H1 (cell line): ENCODE measurements at regions of chr22 and their contacts with region 1.

Region 1: GRCh38 chr22:36986242-36986821 is 32.9 kb downstream of the TST start:
- DNase-seq: peak in 1 of 2 experiments; percentile 87
- H3K4me3 ChIP-seq: no peak overlapping the region
- H3K27ac ChIP-seq: no peak overlapping the region
- H3K4me1 ChIP-seq: no peaks in the 10 kb centered on the region
- H3K27me3 ChIP-seq: peaks cover 0 to 3% (median 0%) of the 10 kb centered on the region in 4 experiments; a peak in 2 of 7 replicates
- CTCF ChIP-seq: peak; percentile 71 to 79 (median 77)
- EP300 ChIP-seq: no peak
- POLR2A ChIP-seq: no peak
- RAD21 ChIP-seq: peak; percentile 64 to 77

Region 2: DNA sequence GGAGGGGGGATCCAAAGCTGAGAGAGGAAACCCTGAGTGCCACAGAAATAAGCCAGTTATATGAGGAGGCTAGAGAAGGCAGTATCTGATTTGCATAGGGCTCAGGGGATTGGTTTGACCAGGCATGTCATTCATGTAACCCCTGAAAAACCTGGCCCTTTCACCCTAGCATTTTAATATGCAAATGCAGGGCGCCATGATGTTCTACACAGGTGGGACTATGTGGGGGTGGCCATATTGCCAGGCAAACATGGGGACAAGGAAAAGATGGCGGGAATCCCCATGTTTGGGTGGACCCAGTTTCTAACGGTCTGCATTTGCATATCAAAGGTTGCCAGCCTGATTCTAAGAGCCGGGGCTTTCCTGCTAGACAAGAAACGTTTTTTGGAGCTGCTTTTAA is 45.7 kb before region 1 on chr22:
- CTCF ChIA-PET with region 1: no interaction called
- POLR2A ChIA-PET with region 1: no interaction called
- DNase-seq: no peak
- H3K4me3 ChIP-seq: no peak overlapping the region
- H3K27ac ChIP-seq: no peak overlapping the region
- H3K4me1 ChIP-seq: 0 out of 7 replicates have a peak, but pooled peaks cover 0 to 2% (median 0%) of the 10 kb centered on the region in 4 experiments
- H3K27me3 ChIP-seq: no peaks in the 10 kb centered on the region; a peak in 1 of 7 replicates
- CTCF ChIP-seq: no peak
- EP300 ChIP-seq: no peak
- POLR2A ChIP-seq: no peak
- RAD21 ChIP-seq: no peak

Region 3: DNA sequence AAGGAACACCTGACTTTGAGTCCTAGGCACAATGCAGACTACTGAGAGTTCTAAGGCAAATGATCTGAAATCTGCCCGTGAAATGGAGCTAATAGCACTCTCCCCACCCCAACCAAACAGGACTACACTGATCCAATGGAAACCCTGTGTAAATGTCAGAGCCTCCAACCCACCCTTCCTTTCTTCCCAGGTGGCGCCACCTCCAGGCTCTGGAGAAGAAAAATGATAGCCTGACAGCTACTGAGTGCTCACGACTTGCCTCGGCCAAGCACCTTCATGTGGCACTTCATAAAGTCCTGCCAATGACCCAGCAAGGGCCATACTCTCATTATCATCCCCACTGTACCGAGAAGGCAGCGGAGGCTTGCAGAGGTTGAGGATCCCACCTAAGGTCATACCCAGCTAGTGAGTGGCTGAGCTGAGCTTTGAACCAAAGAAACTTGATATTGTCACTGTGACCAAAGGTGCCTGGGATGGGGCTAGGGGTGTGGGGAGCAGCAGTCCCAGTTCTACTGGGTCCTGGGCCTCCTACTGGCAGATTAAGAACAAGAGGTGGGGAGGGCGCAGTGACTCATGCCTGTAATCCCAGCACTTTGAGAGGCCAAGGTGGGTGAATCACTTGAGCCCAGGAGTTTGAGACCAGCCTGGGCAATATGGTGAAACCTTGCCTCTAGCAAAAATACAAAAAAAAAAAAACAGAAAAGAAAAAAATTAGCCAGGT is 12.4 kb after region 1 on chr22:
- CTCF ChIA-PET with region 1: interaction called, 26 read pairs
- POLR2A ChIA-PET with region 1: no interaction called
- DNase-seq: no peak
- H3K4me3 ChIP-seq: no peak overlapping the region
- H3K27ac ChIP-seq: no peak overlapping the region
- H3K4me1 ChIP-seq: peaks cover 0 to 7% (median 2%) of the 10 kb centered on the region in 4 experiments; a peak in 6 of 7 replicates
- H3K27me3 ChIP-seq: 0 out of 7 replicates have a peak, but pooled peaks cover 0 to 3% (median 0%) of the 10 kb centered on the region in 4 experiments
- CTCF ChIP-seq: peak; percentile 47 to 57 (median 54)
- EP300 ChIP-seq: no peak
- POLR2A ChIP-seq: no peak
- RAD21 ChIP-seq: peak; percentile 34 to 48; a peak in 3 of 4 replicates

Region 4: DNA sequence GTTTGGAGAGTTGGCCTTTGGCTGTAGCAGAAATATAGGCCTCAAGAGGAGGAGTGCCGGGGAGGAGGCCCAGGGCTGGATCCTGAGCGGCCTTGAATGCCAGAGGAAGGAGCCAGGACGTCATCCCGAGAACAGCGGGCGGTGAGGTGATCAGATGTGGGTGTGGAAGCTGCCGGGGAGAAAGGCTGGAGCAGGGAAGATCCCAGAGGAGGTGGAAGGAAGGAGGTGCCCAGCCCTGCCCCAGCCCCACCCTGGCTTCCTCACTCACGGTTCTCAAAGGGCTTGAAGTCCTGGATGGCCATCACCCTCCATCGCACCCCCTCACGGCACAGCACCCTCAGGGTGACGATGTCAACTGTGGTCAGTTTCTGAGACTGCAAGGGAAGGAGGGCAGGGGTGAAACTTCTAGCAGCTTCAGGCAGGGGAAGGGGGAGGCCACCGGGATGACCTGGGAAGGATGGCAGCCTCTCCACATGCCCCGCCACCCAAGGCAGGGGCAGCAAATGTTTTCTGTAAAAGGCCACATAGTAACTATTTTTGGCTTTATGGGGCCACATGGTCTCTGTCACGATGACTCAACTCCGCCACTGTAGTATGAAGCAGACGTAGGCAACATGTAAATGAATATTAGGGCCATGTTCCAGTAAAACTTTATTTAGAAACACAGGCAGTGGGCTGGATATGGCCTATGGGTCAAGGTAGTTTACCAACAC is 152.7 kb after region 1 on chr22:
- CTCF ChIA-PET with region 1: no interaction called
- POLR2A ChIA-PET with region 1: no interaction called
- DNase-seq: no peak
- H3K4me3 ChIP-seq: no peak overlapping the region
- H3K27ac ChIP-seq: no peak overlapping the region
- H3K4me1 ChIP-seq: no peaks in the 10 kb centered on the region; a peak in 1 of 7 replicates
- H3K27me3 ChIP-seq: no peaks in the 10 kb centered on the region; a peak in 1 of 7 replicates
- CTCF ChIP-seq: no peak
- EP300 ChIP-seq: no peak
- POLR2A ChIP-seq: no peak
- RAD21 ChIP-seq: no peak